Ovary (tissue), 10 donors: ENCODE measurements at regions of chr3 and their contacts with region 1.

Region 1: DNA sequence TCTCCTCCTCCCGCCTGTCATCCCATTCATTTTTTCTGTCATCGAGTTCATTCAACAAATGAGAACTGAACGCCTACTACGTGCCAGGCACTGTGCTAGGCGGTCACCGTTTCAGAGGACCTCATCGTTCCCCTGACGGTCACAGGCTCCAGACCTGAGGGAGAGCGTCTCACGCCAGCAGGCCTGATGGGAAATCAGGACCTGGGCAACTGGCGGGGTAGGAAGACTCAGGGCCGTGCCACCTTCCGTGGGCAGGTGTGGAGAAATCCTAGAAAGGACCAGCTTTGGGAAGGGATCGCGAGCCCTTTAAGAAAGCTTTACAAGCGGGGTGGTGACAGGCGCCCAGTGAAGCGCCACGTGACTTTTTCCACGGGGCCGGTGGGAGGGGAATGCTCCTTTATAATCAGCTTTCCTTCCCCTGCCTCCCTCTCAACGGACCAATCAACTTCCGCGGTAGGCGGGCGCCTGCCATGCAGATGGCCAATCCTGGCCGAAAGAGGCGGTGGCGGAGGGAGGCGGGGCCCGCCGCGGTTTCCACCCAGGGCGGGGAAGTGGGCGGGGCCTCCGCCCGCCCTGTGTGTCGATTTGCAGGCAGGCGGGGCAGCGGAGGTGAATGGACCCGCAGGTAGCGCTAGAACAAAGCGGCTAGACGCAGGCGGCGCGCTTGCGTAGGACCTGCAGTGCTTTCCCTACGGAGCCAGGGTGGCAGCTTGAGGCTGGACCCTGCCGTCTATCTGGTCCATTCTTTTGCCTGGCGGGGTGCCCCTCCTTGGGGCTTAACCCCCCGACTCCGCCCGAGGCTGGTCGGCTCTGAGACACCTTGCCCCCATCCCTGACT is 816 bp upstream of the DUSP7 start:
- DNase-seq: peak; percentile 99 to 100 (median 99)
- H3K4me3 ChIP-seq: peak overlapping the region; percentile 54
- H3K27ac ChIP-seq: peak overlapping the region; percentile 63 to 84
- H3K4me1 ChIP-seq: peaks cover 22% of the 10 kb centered on the region
- H3K27me3 ChIP-seq: no peaks in the 10 kb centered on the region
- CTCF ChIP-seq: no peak
- EP300 ChIP-seq: peak; percentile 70
- POLR2A ChIP-seq: peak; percentile 20

Region 2: GRCh38 chr3:51995346-51996163 is 61.6 kb before region 1 on chr3 and contains the start of gene RPL29:
- intact Hi-C with region 1: loop called in 2 of 4 experiments (anchors 2 to 5 kb)
- DNase-seq: peak; percentile 88 to 94 (median 94)
- H3K4me3 ChIP-seq: peak within 1 kb of the TSS; percentile 60
- H3K27ac ChIP-seq: peak within 1 kb of the TSS; percentile 71 to 74
- H3K4me1 ChIP-seq: peaks cover 6% of the 10 kb centered on the region
- H3K27me3 ChIP-seq: no peaks in the 10 kb centered on the region
- CTCF ChIP-seq: peak; percentile 20 to 42 (median 29)
- EP300 ChIP-seq: no peak
- POLR2A ChIP-seq: peak; percentile 76
- total RNA-seq, gene RPL29: 1,785 to 3,905 (median 1,999) TPM

Region 3: GRCh38 chr3:52123106-52123725 is 66.0 kb after region 1 on chr3:
- intact Hi-C with region 1: loop called in 1 of 4 experiments (anchors 5 kb)
- DNase-seq: peak; percentile 41 to 81 (median 67)
- H3K4me3 ChIP-seq: no peak overlapping the region
- H3K27ac ChIP-seq: no peak overlapping the region
- H3K4me1 ChIP-seq: peaks cover 3% of the 10 kb centered on the region
- H3K27me3 ChIP-seq: no peaks in the 10 kb centered on the region
- CTCF ChIP-seq: peak; percentile 58 to 87 (median 68)
- EP300 ChIP-seq: no peak
- POLR2A ChIP-seq: no peak

Region 4: GRCh38 chr3:52144034-52144795 is 87.0 kb after region 1 on chr3:
- intact Hi-C with region 1: loop called in 1 of 4 experiments (anchors 5 kb)
- DNase-seq: peak; percentile 79 to 89 (median 86)
- H3K4me3 ChIP-seq: no peak overlapping the region
- H3K27ac ChIP-seq: no peak overlapping the region
- H3K4me1 ChIP-seq: no peaks in the 10 kb centered on the region
- H3K27me3 ChIP-seq: no peaks in the 10 kb centered on the region
- CTCF ChIP-seq: peak; percentile 80 to 96 (median 95)
- EP300 ChIP-seq: no peak
- POLR2A ChIP-seq: peak; percentile 35

Region 5: GRCh38 chr3:52346623-52347530 is 289.7 kb after region 1 on chr3:
- intact Hi-C with region 1: no loop called
- DNase-seq: no peak
- H3K4me3 ChIP-seq: no peak overlapping the region
- H3K27ac ChIP-seq: no peak overlapping the region
- H3K4me1 ChIP-seq: no peaks in the 10 kb centered on the region
- H3K27me3 ChIP-seq: no peaks in the 10 kb centered on the region
- CTCF ChIP-seq: no peak
- EP300 ChIP-seq: no peak
- POLR2A ChIP-seq: no peak

Region 6: DNA sequence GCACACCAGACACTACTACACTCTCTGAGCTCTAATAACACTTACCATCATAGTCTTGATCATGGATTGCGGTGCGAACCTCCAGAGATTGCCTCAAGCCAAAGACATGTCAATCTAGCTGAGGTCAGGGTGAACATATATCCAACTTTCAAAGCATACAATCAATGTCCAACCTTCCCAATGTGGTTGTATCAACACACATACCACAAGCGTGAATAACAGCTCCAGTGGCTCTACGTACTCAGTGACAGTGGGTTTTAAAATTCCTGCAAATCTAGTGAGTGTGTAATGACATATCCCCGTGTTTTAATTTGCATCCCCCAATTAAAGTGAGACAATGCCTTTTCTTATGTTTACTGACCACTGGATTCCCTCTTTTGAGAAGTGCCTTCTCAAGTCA is 959.0 kb after region 1 on chr3:
- intact Hi-C with region 1: no loop called
- DNase-seq: no peak
- H3K4me3 ChIP-seq: no peak overlapping the region
- H3K27ac ChIP-seq: no peak overlapping the region
- H3K4me1 ChIP-seq: no peaks in the 10 kb centered on the region
- H3K27me3 ChIP-seq: no peaks in the 10 kb centered on the region
- CTCF ChIP-seq: no peak
- EP300 ChIP-seq: no peak
- POLR2A ChIP-seq: no peak